Caco-2 (cell line): ENCODE measurements at regions of chr11 and their contacts with region 1.

Region 1: DNA sequence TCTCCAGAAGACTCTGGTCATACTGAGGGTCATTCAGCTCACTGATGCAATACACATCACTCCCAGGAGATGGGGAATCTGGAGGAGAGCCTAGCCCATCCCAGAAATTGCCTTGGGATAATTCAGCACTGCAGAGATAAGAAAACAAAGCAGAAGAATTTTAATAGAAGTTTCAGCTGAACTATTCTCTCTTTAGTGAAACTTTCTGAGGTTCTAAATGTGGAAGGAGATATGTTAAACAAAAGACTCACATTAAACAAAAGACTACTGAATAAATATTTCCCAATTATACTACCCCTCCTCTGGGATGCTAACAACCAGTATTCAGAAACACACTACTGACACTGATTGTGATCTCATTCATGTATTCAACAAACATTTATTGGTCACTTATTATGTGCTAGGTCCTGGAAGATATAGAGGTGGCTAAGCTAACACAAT is 47.8 kb downstream of the C2CD3 start:
- DNase-seq: peak; percentile 79 to 84
- H3K4me3 ChIP-seq: no peak overlapping the region
- H3K4me3 Mint-ChIP-seq: peak overlapping the region; percentile 4
- H3K27ac Mint-ChIP-seq: peak overlapping the region; percentile 52
- H3K4me1 ChIP-seq: peaks cover 35% of the 10 kb centered on the region
- H3K4me1 Mint-ChIP-seq: peaks cover 43% of the 10 kb centered on the region
- H3K27me3 ChIP-seq: no peaks in the 10 kb centered on the region
- H3K27me3 Mint-ChIP-seq: no peaks in the 10 kb centered on the region
- CTCF ChIP-seq: peak; percentile 13 to 62

Region 2: GRCh38 chr11:74069147-74070047 is 53.6 kb before region 1 on chr11:
- CTCF ChIA-PET with region 1: no interaction called
- POLR2A ChIA-PET with region 1: no interaction called
- intact Hi-C with region 1: loop called (anchors 2 kb)
- DNase-seq: peak; percentile 53 to 76
- H3K4me3 ChIP-seq: no peak overlapping the region
- H3K4me3 Mint-ChIP-seq: no peak overlapping the region
- H3K27ac Mint-ChIP-seq: no peak overlapping the region
- H3K4me1 ChIP-seq: peaks cover 50% of the 10 kb centered on the region
- H3K4me1 Mint-ChIP-seq: peaks cover 46% of the 10 kb centered on the region
- H3K27me3 ChIP-seq: no peaks in the 10 kb centered on the region
- H3K27me3 Mint-ChIP-seq: no peaks in the 10 kb centered on the region
- CTCF ChIP-seq: no peak

Region 3: GRCh38 chr11:74100735-74101134 is 22.3 kb before region 1 on chr11:
- CTCF ChIA-PET with region 1: no interaction called
- POLR2A ChIA-PET with region 1: no interaction called
- intact Hi-C with region 1: loop called (anchors 2 kb)
- DNase-seq: no peak
- H3K4me3 ChIP-seq: no peak overlapping the region
- H3K4me3 Mint-ChIP-seq: no peak overlapping the region
- H3K27ac Mint-ChIP-seq: no peak overlapping the region
- H3K4me1 ChIP-seq: peaks cover 11% of the 10 kb centered on the region
- H3K4me1 Mint-ChIP-seq: no peaks in the 10 kb centered on the region
- H3K27me3 ChIP-seq: no peaks in the 10 kb centered on the region
- H3K27me3 Mint-ChIP-seq: no peaks in the 10 kb centered on the region
- CTCF ChIP-seq: no peak

Region 4: DNA sequence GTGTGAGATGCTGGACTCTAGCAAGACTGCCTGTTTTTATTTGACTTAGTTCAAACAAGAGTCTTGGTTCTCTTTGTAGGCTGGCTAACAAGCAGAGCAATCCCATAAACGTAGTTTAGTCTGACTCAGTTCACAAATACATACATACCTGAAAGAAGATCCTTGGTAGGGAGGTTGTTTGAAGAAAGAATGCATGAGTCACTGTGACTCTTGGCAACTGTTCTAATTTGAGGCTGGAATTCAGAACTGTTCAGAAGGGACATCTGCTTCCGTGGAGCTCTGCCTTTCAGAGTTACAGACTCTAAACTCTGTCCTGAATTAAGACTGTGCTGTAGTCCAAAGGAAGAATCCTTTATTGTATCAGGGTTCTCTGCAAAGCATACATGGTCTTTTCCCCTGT is 15.5 kb after region 1 on chr11:
- CTCF ChIA-PET with region 1: no interaction called
- POLR2A ChIA-PET with region 1: interaction called, 5 read pairs
- intact Hi-C with region 1: loop called (anchors 1 kb)
- DNase-seq: peak; percentile 75 to 82
- H3K4me3 ChIP-seq: no peak overlapping the region
- H3K4me3 Mint-ChIP-seq: peak overlapping the region; percentile 62
- H3K27ac Mint-ChIP-seq: peak overlapping the region; percentile 95
- H3K4me1 ChIP-seq: peaks cover 67% of the 10 kb centered on the region
- H3K4me1 Mint-ChIP-seq: peaks cover 60% of the 10 kb centered on the region
- H3K27me3 ChIP-seq: no peaks in the 10 kb centered on the region
- H3K27me3 Mint-ChIP-seq: no peaks in the 10 kb centered on the region
- CTCF ChIP-seq: no peak

Region 5: DNA sequence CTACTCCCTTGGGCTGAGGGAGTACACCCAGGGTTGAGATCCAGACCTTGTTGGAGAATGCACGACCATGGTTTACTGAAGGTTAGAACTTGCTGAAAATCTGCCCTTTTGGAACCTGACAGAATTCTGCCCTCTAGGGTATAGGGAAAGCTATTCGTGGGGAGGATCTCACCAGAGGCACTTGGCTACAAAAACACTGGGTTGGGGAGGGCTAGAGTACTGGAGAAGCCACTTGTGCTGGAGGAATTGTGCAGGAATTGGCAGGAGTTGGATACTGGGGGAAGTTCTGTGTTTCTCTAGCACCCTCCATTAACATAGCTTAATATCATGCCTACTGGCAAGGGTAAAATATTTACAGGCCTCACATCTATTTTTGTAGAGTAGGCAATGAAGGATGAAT is 103.9 kb after region 1 on chr11:
- CTCF ChIA-PET with region 1: no interaction called
- POLR2A ChIA-PET with region 1: no interaction called
- intact Hi-C with region 1: loop called (anchors 5 kb)
- DNase-seq: peak in 1 of 2 experiments; percentile 48
- H3K4me3 ChIP-seq: no peak overlapping the region
- H3K4me3 Mint-ChIP-seq: no peak overlapping the region
- H3K27ac Mint-ChIP-seq: no peak overlapping the region
- H3K4me1 ChIP-seq: no peaks in the 10 kb centered on the region
- H3K4me1 Mint-ChIP-seq: peaks cover 9% of the 10 kb centered on the region
- H3K27me3 ChIP-seq: no peaks in the 10 kb centered on the region
- H3K27me3 Mint-ChIP-seq: no peaks in the 10 kb centered on the region
- CTCF ChIP-seq: peak in 1 of 2 experiments; percentile 27